Activated CD4-positive, alpha-beta T cell treated with anti-CD3 and anti-CD28 coated beads for 36 hours (primary cell): ENCODE measurements at regions of chr4 and their contacts with region 1.

Region 1: DNA sequence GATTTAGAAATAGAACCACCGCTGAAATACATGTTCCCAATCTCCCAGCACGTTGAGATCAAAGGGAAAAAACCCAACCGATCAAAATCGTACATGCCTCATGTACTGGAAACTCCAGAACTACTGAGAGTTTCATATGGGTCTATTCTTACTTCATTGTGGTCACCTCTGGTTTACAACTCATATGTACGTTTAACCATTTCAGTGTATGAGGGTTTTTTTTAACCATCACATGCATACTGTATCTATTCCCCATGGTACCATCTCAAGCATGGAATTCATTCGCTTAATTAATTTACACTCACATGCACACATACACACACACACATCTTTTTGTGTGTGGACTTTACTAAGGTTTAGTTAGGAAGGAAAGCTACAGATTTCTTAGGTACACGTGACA is 46.0 kb upstream of the CLNK start:
- DNase-seq: no peak
- ATAC-seq: peak; percentile 60
- H3K4me3 Mint-ChIP-seq: no peak overlapping the region
- H3K27ac Mint-ChIP-seq: peak overlapping the region; percentile 26
- H3K4me1 Mint-ChIP-seq: peaks cover 58% of the 10 kb centered on the region
- H3K27me3 Mint-ChIP-seq: peaks cover 2% of the 10 kb centered on the region

Region 2: DNA sequence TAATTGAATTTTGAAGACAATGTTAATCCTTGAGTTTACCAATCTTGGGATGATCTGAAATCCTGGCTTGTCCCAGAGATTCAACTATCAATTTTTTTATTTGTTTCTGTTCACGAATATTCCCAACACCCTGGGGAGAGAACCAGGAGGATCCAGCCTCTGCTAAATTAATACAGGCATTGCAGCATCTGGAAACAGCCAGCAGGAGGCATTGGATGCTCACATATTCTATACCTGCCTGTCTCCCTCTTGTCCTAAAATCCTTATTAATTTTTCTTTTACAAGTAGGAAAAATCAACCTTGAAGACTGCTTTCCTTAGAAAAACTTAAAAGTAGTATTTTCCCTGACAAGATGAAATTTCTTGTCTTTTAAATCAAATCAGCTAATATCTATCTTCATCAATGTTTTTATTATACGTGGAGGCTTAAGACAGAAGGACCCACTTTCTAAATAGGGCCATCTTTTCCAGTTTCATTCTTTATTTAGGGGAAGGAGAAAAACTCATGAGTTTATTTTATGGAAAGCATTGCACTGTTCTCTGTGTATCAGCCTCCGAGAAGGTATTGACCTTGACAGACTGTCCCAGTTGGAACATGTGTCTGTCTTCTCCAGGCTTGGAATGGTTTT is 148.4 kb before region 1 on chr4:
- CTCF ChIA-PET with region 1: no interaction called
- POLR2A ChIA-PET with region 1: no interaction called
- intact Hi-C with region 1: loop called in 1 of 2 experiments (anchors 10 kb)
- DNase-seq: peak; percentile 38
- ATAC-seq: no peak
- H3K4me3 Mint-ChIP-seq: no peak overlapping the region
- H3K27ac Mint-ChIP-seq: no peak overlapping the region
- H3K4me1 Mint-ChIP-seq: peaks cover 18% of the 10 kb centered on the region
- H3K27me3 Mint-ChIP-seq: no peaks in the 10 kb centered on the region

Region 3: DNA sequence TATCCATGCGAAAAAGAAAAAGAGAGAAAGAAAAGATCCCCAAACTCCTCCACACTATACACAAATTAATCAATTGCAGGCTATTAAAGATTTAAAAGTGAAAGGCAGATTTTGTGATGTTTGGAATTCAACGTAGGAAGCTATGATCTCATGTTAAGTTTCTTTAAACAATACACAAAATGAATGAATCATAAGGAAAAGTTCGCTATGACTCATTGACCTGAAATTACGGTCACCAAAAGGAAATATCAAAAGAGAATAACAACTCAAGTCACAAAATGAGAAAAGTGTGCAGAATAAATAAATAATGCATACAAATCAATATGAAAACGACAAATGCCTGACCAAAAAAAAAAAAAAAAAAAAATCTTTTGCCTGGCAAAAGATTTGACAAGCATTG is 74.6 kb before region 1 on chr4:
- CTCF ChIA-PET with region 1: no interaction called
- POLR2A ChIA-PET with region 1: no interaction called
- intact Hi-C with region 1: loop called (anchors 2 kb)
- DNase-seq: no peak
- ATAC-seq: peak; percentile 64
- H3K4me3 Mint-ChIP-seq: no peak overlapping the region
- H3K27ac Mint-ChIP-seq: peak overlapping the region; percentile 31
- H3K4me1 Mint-ChIP-seq: peaks cover 25% of the 10 kb centered on the region
- H3K27me3 Mint-ChIP-seq: no peaks in the 10 kb centered on the region

Region 4: DNA sequence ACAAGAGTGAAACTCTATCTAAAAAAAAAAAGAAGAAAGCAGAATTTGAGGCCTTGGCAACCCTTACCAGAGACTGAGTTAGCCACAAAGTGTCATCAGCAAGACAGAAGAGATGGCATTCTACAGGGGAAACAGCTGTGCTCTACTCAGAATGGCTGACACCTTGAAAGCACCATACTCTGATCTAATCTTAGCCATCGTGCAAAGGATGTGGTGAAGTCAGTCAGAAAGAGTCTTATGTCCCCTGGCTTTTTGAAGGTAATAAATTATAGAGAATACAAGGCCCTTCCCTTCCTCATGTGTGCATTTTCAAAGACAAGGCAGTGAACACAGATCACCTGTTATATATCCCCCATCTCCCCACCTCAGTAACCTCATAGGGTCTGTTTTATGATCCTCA is 59.2 kb before region 1 on chr4:
- CTCF ChIA-PET with region 1: no interaction called
- POLR2A ChIA-PET with region 1: no interaction called
- intact Hi-C with region 1: loop called (anchors 5 kb)
- DNase-seq: peak; percentile 28
- ATAC-seq: peak; percentile 95
- H3K4me3 Mint-ChIP-seq: no peak overlapping the region
- H3K27ac Mint-ChIP-seq: peak overlapping the region; percentile 59
- H3K4me1 Mint-ChIP-seq: peaks cover 26% of the 10 kb centered on the region
- H3K27me3 Mint-ChIP-seq: no peaks in the 10 kb centered on the region

Region 5: DNA sequence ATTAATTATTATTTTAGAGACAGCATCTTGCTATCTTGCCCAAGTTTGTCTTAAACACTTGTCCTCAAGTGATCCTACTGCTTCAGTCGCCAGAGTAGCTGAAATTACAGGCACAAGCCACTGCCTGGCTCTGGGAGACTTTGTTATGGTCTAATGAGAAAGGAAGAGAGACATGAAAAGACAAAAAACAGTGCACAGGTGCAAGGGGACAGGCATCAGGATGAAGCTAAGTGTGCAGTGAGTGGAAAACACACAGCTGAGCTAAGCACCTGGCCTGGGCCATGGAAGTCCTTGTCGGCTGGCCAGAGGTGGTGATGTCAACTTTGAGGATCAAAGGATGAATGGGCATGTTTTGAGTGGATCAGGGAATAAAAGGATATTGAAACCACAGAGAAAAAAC is 595.4 kb after region 1 on chr4:
- CTCF ChIA-PET with region 1: no interaction called
- POLR2A ChIA-PET with region 1: no interaction called
- intact Hi-C with region 1: no loop called
- DNase-seq: no peak
- ATAC-seq: no peak
- H3K4me3 Mint-ChIP-seq: no peak overlapping the region
- H3K27ac Mint-ChIP-seq: no peak overlapping the region
- H3K4me1 Mint-ChIP-seq: no peaks in the 10 kb centered on the region
- H3K27me3 Mint-ChIP-seq: peaks cover 2% of the 10 kb centered on the region

Region 6: GRCh38 chr4:11480683-11481082 is 750.1 kb after region 1 on chr4:
- CTCF ChIA-PET with region 1: no interaction called
- POLR2A ChIA-PET with region 1: no interaction called
- intact Hi-C with region 1: loop called in 1 of 2 experiments (anchors 10 kb)
- DNase-seq: peak; percentile 27
- ATAC-seq: peak; percentile 89
- H3K4me3 Mint-ChIP-seq: no peak overlapping the region
- H3K27ac Mint-ChIP-seq: no peak overlapping the region
- H3K4me1 Mint-ChIP-seq: peaks cover 14% of the 10 kb centered on the region
- H3K27me3 Mint-ChIP-seq: no peaks in the 10 kb centered on the region